IMR-90 (cell line): ENCODE measurements at regions of chr19 and their contacts with region 1.

Region 1: GRCh38 chr19:45506246-45506990 is 861 bp upstream of the VASP start:
- DNase-seq: peak; percentile 88
- ATAC-seq: peak; percentile 60
- H3K4me3 ChIP-seq: peak overlapping the region; percentile 92
- H3K27ac ChIP-seq: peak overlapping the region; percentile 94
- H3K4me1 ChIP-seq: peaks cover 11% of the 10 kb centered on the region
- H3K27me3 ChIP-seq: no peaks in the 10 kb centered on the region
- CTCF ChIP-seq: peak; percentile 59
- POLR2A ChIP-seq: peak; percentile 65
- RAD21 ChIP-seq: no peak

Region 2: GRCh38 chr19:44903602-44904425 is 602.6 kb before region 1 on chr19:
- CTCF ChIA-PET with region 1: no interaction called
- POLR2A ChIA-PET with region 1: no interaction called
- dilution Hi-C with region 1: no loop called
- in situ Hi-C with region 1: no loop called
- intact Hi-C with region 1: no loop called
- DNase-seq: peak; percentile 49
- ATAC-seq: peak; percentile 88
- H3K4me3 ChIP-seq: no peak overlapping the region
- H3K27ac ChIP-seq: no peak overlapping the region
- H3K4me1 ChIP-seq: peaks cover 3% of the 10 kb centered on the region; the same call in 1 of the 2 replicates
- H3K27me3 ChIP-seq: peaks cover 8% of the 10 kb centered on the region
- CTCF ChIP-seq: peak; percentile 95
- POLR2A ChIP-seq: no peak
- RAD21 ChIP-seq: peak; percentile 86

Region 3: DNA sequence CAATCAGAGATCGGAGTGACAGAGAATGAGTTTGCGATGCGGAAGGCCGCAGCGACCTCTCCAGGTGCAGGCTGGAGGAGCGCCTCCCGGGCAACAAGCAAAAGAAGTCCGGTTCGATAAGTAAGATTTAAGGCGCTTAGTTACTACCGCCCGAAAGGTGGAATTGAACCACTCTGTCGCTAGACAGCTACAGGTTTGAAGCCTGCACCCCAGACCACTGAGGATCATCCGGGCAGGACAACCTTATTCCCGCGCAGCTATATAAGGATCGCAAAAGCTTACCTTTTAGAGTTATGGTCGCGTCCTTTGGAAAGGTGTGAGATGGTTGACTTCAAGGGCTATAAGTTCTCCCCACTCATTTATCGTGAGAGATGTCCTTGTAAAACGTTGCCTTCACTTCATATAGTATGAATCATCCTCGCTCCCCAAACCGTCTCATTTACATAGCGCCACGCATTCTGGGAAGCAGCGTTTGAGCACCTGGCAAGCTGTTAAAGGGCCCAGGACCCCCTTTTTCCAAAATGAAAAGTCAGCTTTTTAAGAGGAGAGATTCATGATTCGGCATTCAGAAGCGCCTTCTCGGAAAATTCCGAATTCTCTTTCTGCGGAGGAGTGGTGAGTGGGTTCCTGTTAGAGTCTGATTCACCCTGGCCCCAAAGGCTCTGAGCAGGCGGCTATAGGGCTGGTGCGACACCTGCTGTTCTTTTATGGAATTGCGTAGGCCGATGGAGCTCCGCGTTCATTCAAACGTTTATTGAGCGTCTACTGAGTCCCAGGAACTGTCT is 27.8 kb before region 1 on chr19:
- CTCF ChIA-PET with region 1: no interaction called
- POLR2A ChIA-PET with region 1: no interaction called
- dilution Hi-C with region 1: no loop called
- in situ Hi-C with region 1: no loop called
- intact Hi-C with region 1: no loop called
- DNase-seq: peak; percentile 96
- ATAC-seq: peak; percentile 96
- H3K4me3 ChIP-seq: peak overlapping the region; percentile 49
- H3K27ac ChIP-seq: peak overlapping the region; percentile 68
- H3K4me1 ChIP-seq: peaks cover 4% of the 10 kb centered on the region
- H3K27me3 ChIP-seq: no peaks in the 10 kb centered on the region
- CTCF ChIP-seq: no peak
- POLR2A ChIP-seq: no peak
- RAD21 ChIP-seq: no peak

Region 4: GRCh38 chr19:45523642-45524256 is 17.3 kb after region 1 on chr19:
- CTCF ChIA-PET with region 1: no interaction called
- POLR2A ChIA-PET with region 1: no interaction called
- dilution Hi-C with region 1: no loop called
- in situ Hi-C with region 1: no loop called
- intact Hi-C with region 1: no loop called
- DNase-seq: peak; percentile 80
- ATAC-seq: peak; percentile 92
- H3K4me3 ChIP-seq: no peak overlapping the region
- H3K27ac ChIP-seq: no peak overlapping the region
- H3K4me1 ChIP-seq: peaks cover 2% of the 10 kb centered on the region; the same call in 1 of the 2 replicates
- H3K27me3 ChIP-seq: no peaks in the 10 kb centered on the region
- CTCF ChIP-seq: peak; percentile 93
- POLR2A ChIP-seq: no peak
- RAD21 ChIP-seq: peak; percentile 93

Region 5: GRCh38 chr19:45692187-45693105 is 186.0 kb after region 1 on chr19 and contains the start of gene QPCTL:
- CTCF ChIA-PET with region 1: no interaction called
- POLR2A ChIA-PET with region 1: no interaction called
- dilution Hi-C with region 1: no loop called
- in situ Hi-C with region 1: no loop called
- intact Hi-C with region 1: loop called (anchors 5 kb)
- DNase-seq: peak; percentile 100
- ATAC-seq: peak; percentile 94
- H3K4me3 ChIP-seq: peak within 1 kb of the TSS; percentile 89
- H3K27ac ChIP-seq: peak within 1 kb of the TSS; percentile 83
- H3K4me1 ChIP-seq: peaks cover 4% of the 10 kb centered on the region
- H3K27me3 ChIP-seq: no peaks in the 10 kb centered on the region
- CTCF ChIP-seq: no peak
- POLR2A ChIP-seq: peak; percentile 91
- RAD21 ChIP-seq: no peak
- total RNA-seq, gene QPCTL: 6.6 and 7.8 TPM in 2 replicates